Right cardiac atrium (tissue), 5 donors: ENCODE measurements at regions of chr2 and their contacts with region 1.

Region 1: DNA sequence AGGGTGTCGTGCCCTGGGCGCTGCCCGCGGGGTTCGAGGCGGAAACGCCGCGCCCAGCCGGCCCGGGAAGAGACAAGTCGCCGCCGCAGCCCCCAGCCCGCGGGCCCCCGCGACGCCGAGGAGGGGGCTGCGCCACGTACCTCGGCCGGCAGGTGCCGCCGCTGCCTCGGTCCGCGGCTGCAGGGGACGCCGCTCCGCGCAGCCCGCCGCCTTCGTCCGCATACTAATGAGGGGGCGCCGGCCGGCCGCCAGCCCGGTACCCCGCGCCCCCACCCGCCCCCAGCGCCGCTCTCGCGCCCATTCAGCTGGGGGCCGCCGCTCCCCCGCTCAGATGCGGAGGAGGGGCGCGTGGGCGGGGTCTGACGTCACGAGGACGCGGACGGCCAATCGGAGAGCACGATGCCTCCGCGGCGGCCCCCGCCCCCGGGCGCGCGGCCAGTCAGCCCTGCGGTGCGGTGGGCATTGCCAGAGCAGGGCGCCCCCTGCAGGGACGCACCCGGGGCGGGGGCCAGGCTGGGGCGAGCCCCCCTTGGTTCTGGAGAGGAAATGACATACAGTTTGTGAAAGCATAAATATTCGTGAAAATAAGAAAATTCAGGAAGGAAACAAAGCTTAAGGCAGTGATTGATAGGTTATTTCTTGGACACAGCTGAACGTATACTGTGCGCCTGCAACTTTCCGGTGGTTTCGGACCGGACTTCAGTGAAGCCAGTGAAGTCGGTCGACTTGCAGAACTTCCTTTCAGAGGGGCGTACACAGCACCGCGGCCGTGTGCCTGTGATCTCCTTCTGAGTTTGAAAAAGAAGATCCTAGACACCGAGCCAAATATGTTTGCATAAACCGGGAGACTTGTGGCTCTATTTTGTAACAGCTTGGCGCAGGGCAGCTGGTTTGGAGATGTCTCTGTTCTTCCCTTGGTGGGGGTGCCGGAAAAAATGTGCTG is at the start of gene ST3GAL5:
- DNase-seq: peak; percentile 93 to 98 (median 98)
- ATAC-seq: peak; percentile 91
- H3K4me3 ChIP-seq: peak within 1 kb of the TSS; percentile 84
- H3K27ac ChIP-seq: peak within 1 kb of the TSS; percentile 76
- H3K4me1 ChIP-seq: peaks cover 4% of the 10 kb centered on the region
- H3K27me3 ChIP-seq: no peaks in the 10 kb centered on the region
- total RNA-seq, gene ST3GAL5: 8.7 to 14.0 (median 9.7) TPM

Region 2: DNA sequence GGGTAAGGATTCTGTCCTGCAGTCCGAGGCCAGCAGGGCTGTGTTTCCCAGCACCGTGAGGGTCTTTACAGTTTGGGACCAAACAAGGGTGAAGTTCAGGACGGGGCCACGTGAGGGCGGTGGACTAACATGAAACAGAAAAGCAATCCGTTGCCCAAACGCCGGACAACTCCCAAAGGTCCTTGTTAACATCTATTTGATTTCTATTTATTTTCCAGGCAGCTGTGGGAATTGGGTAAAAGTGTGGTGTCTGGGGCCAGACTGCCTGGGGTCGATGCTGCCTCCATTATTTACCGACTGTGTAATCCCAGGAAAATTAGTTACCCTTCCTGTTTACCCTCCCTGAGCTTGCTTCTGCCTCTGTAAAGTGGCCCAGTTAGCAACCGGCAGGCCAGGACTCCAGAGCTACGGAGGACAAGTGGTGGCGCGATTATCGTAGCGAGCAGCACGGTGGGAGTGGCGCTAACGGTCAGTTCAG is 822.0 kb before region 1 on chr2:
- intact Hi-C with region 1: no loop called
- DNase-seq: peak; percentile 79 to 92 (median 87)
- ATAC-seq: peak; percentile 84 to 85
- H3K4me3 ChIP-seq: peak overlapping the region; percentile 61
- H3K27ac ChIP-seq: no peak overlapping the region
- H3K4me1 ChIP-seq: no peaks in the 10 kb centered on the region
- H3K27me3 ChIP-seq: no peaks in the 10 kb centered on the region

Region 3: GRCh38 chr2:85826990-85827878 is 61.7 kb before region 1 on chr2:
- intact Hi-C with region 1: loop called in 1 of 4 experiments (anchors 5 kb)
- DNase-seq: peak; percentile 79 to 92 (median 90)
- ATAC-seq: peak; percentile 91 to 95
- H3K4me3 ChIP-seq: no peak overlapping the region
- H3K27ac ChIP-seq: no peak overlapping the region
- H3K4me1 ChIP-seq: no peaks in the 10 kb centered on the region
- H3K27me3 ChIP-seq: no peaks in the 10 kb centered on the region

Region 4: GRCh38 chr2:86035883-86036668 is 147.1 kb after region 1 on chr2:
- intact Hi-C with region 1: loop called in 1 of 4 experiments (anchors 10 kb)
- DNase-seq: peak; percentile 81 to 90 (median 89)
- ATAC-seq: peak; percentile 70 to 83
- H3K4me3 ChIP-seq: no peak overlapping the region
- H3K27ac ChIP-seq: peak overlapping the region; percentile 93
- H3K4me1 ChIP-seq: peaks cover 17% of the 10 kb centered on the region
- H3K27me3 ChIP-seq: no peaks in the 10 kb centered on the region

Region 5: GRCh38 chr2:86525421-86526340 is 636.7 kb after region 1 on chr2:
- intact Hi-C with region 1: no loop called
- DNase-seq: no peak
- ATAC-seq: no peak
- H3K4me3 ChIP-seq: no peak overlapping the region
- H3K27ac ChIP-seq: no peak overlapping the region
- H3K4me1 ChIP-seq: no peaks in the 10 kb centered on the region
- H3K27me3 ChIP-seq: no peaks in the 10 kb centered on the region